ENCODE measurements at regions of chr20 and their contacts with region 1.

Region 1: DNA sequence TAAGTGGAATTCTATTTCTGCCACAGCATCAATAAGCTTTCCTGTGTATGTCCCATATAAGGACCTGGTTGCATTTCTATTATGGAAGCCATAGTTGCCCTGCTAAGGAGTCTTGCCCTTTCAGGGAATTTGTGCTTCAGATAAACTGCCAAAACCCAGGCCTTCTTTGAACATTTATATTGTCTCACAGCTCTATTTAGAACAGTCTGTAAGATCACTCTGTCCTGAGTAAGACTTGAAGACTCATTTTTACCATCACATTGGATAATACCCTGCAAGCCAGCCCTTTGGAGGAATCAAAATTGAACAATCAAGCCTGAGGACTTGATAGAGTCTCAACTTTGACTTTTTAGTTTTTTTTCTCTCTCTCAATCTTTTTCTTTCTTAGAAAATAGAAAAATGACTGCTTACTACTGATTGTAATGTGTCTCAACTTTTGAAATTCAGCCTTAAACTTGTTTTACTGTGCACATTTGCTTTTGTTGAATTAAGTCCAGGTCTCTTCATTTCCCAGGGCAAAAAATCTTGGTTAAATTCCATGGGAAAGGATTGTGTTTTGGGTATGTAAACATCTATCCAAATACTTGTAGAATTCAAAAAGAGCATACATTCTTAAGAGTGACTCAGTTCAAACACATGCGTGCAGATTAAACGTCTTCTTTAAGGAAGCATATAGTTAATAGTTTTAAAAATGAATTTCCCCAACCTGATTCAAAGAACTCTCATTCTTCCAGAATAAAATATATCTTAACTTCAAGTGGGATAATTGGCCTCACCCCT is 91.2 kb downstream of the PLCB1 start:
- DNase-seq: peak; percentile 50
- ATAC-seq: peak; percentile 67
- H3K4me3 ChIP-seq: no peak overlapping the region
- H3K27ac ChIP-seq: peak overlapping the region; percentile 44
- H3K4me1 ChIP-seq: 0 out of 2 replicates have a peak, but pooled peaks cover 13% of the 10 kb centered on the region
- H3K27me3 ChIP-seq: 0 out of 2 replicates have a peak, but pooled peaks cover 2% of the 10 kb centered on the region
- CTCF ChIP-seq: no peak

Region 2: DNA sequence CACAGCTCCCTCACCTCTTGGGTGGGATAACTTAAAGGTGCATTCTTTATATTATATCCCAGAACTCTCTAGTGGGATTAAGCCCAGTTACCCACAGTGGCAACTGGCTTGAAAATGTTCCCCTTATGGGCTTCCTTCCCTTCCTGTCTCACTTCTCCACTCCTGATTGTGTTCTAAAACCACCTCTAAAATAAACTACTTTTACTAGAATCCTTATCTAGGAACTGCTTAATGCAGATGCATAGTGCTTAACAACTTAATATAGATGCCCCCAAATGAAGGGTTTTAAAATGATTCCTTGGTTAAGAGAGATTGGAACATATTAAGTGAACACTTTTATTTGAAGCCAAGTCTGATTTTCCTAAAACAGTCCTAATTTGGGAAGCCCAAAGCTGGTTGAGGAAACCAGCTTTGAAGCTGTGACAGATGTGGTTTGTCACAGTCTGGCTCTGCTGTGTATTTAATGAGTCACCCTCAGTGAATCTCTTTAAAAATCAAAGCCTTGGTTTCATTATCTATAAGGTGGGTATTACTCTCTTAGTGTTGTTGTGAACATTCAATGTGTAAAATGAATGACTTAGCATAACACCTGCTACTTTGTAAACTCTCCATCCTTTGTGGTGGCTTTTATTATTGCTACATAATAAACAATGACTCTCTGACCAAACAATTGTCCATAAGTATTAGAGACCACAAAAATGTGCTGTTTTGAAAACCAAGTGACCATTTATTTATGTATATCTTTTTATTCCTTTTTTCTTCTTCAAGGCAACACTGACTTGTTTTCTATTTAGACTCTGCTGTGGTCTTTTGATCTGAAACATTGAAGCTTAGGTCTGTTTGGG is 66.8 kb before region 1 on chr20:
- CTCF ChIA-PET with region 1: no interaction called
- POLR2A ChIA-PET with region 1: no interaction called
- intact Hi-C with region 1: loop called (anchors 5 kb)
- DNase-seq: peak; percentile 80
- ATAC-seq: peak; percentile 78
- H3K4me3 ChIP-seq: no peak overlapping the region
- H3K27ac ChIP-seq: no peak overlapping the region
- H3K4me1 ChIP-seq: peaks cover 42% of the 10 kb centered on the region
- H3K27me3 ChIP-seq: no peaks in the 10 kb centered on the region
- CTCF ChIP-seq: no peak